A549 (cell line): ENCODE measurements at regions of chrX and their contacts with region 1.

Region 1: DNA sequence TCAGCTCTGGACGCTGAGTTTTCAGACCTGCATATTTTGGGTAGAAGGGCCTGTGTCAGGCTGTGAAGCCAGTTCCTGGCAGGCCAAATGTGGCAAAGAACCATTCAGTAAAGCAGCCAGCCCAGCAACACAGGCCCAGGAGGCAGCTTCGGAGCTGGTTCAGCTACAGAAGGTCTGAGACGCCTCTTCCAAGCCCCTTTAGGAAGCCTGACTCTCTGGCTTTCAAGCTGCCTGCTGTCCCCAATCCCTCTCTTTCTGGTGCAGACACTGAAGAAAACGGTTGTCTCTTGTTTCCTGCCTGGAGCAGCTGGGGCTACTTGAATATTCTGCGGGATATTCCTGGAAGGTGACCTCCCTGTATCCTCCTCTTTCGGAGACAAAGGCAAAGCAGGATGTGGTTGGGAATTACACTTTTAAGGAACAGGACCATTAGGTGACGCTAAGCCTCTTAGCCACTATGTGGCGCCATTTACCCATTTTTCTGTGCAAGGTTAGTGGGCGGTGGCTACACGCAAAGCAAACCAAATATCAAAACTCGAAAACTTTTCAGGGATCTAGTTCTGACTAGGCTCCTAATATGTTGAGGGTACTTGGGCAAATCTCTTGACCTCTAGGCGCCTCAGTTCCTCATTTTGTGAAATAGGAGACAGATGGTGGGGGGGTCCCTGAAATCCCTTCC is 47.2 kb upstream of the LAS1L start:
- DNase-seq: peak; percentile 59 to 62
- ATAC-seq: peak; percentile 95 to 98
- H3K4me3 ChIP-seq: no peak overlapping the region
- H3K27ac ChIP-seq: no peak overlapping the region
- H3K4me1 ChIP-seq: no peaks in the 10 kb centered on the region
- CTCF ChIP-seq: peak; percentile 74
- EP300 ChIP-seq: no peak
- POLR2A ChIP-seq: no peak
- RAD21 ChIP-seq: peak; percentile 90 to 93

Region 2: GRCh38 chrX:65595460-65595876 is 13.7 kb after region 1 on chrX:
- CTCF ChIA-PET with region 1: interaction called, 15 read pairs
- POLR2A ChIA-PET with region 1: no interaction called
- DNase-seq: peak; percentile 74 to 92
- ATAC-seq: peak; percentile 93 to 97
- H3K4me3 ChIP-seq: no peak overlapping the region
- H3K27ac ChIP-seq: peak overlapping the region; percentile 69 to 86
- H3K4me1 ChIP-seq: peaks cover 13% of the 10 kb centered on the region
- CTCF ChIP-seq: peak; percentile 94
- EP300 ChIP-seq: no peak
- POLR2A ChIP-seq: no peak
- RAD21 ChIP-seq: peak; percentile 89 to 93

Region 3: GRCh38 chrX:65985922-65986588 is 404.3 kb after region 1 on chrX:
- CTCF ChIA-PET with region 1: interaction called, 49 read pairs
- POLR2A ChIA-PET with region 1: no interaction called
- DNase-seq: peak; percentile 25 to 50
- ATAC-seq: peak; percentile 91 to 98
- H3K4me3 ChIP-seq: no peak overlapping the region
- H3K27ac ChIP-seq: no peak overlapping the region
- H3K4me1 ChIP-seq: no peaks in the 10 kb centered on the region
- CTCF ChIP-seq: peak; percentile 55
- EP300 ChIP-seq: no peak
- POLR2A ChIP-seq: no peak
- RAD21 ChIP-seq: peak; percentile 74 to 75

Region 4: GRCh38 chrX:66728818-66729271 is 1147.0 kb after region 1 on chrX:
- CTCF ChIA-PET with region 1: interaction called, 19 read pairs
- POLR2A ChIA-PET with region 1: no interaction called
- DNase-seq: peak; percentile 30 to 74
- ATAC-seq: peak; percentile 98 to 99
- H3K4me3 ChIP-seq: peak overlapping the region; percentile 51
- H3K27ac ChIP-seq: peak overlapping the region; percentile 70 to 81
- H3K4me1 ChIP-seq: no peaks in the 10 kb centered on the region
- CTCF ChIP-seq: peak; percentile 74
- EP300 ChIP-seq: no peak
- POLR2A ChIP-seq: no peak
- RAD21 ChIP-seq: peak; percentile 68 to 78